Adrenal gland (tissue), 19 donors: ENCODE measurements at regions of chr13 and their contacts with region 1.

Region 1: GRCh38 chr13:110561344-110562035 is at the start of gene RAB20:
- DNase-seq: peak; percentile 91 to 94 (median 94)
- H3K4me3 ChIP-seq: peak within 1 kb of the TSS; percentile 67 to 98 (median 90)
- H3K27ac ChIP-seq: peak within 1 kb of the TSS; percentile 91 to 99 (median 98)
- H3K4me1 ChIP-seq: peaks cover 37 to 52% of the 10 kb centered on the region in 2 donors
- H3K27me3 ChIP-seq: no peaks in the 10 kb centered on the region
- CTCF ChIP-seq: no peak
- POLR2A ChIP-seq: peak; percentile 51 to 87
- total RNA-seq, gene RAB20: 30.8 to 259 (median 48.2) TPM

Region 2: DNA sequence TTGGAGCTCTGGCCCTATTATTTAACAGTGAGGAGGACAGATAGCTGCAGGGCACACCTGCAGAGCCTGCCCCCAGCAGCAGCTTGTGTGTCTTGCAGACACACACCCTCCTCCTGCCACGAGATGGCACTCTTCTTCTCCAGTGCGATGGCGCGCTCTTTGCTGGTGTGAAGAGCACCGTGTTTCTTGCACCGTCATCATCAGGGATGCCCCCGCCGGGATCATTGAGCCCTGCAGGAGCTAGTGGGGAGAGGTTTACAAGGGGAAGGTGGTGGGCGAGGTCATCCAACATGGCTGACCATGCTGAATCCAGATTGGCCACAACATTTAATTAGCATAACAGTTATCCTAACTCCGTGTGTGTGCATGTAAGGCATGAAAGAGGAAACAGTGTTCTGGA is 105.5 kb before region 1 on chr13:
- intact Hi-C with region 1: loop called in 1 of 2 experiments (anchors 10 kb)
- DNase-seq: peak; percentile 81 to 93 (median 86)
- H3K4me3 ChIP-seq: no peak overlapping the region
- H3K27ac ChIP-seq: no peak overlapping the region
- H3K4me1 ChIP-seq: no peaks in the 10 kb centered on the region
- H3K27me3 ChIP-seq: no peaks in the 10 kb centered on the region
- CTCF ChIP-seq: peak; percentile 81 to 94 (median 86)
- POLR2A ChIP-seq: no peak

Region 3: GRCh38 chr13:110499621-110500281 is 61.7 kb before region 1 on chr13:
- intact Hi-C with region 1: loop called in 1 of 2 experiments (anchors 5 kb)
- DNase-seq: no peak
- H3K4me3 ChIP-seq: no peak overlapping the region
- H3K27ac ChIP-seq: peak overlapping the region in 1 of 5 donors; percentile 4
- H3K4me1 ChIP-seq: peaks cover 7 to 8% of the 10 kb centered on the region in 2 donors
- H3K27me3 ChIP-seq: no peaks in the 10 kb centered on the region
- CTCF ChIP-seq: no peak
- POLR2A ChIP-seq: no peak

Region 4: GRCh38 chr13:110517505-110518225 is 43.8 kb before region 1 on chr13:
- intact Hi-C with region 1: loop called in 1 of 2 experiments (anchors 5 kb)
- DNase-seq: peak in 2 of 7 donors; percentile 29 to 53
- H3K4me3 ChIP-seq: no peak overlapping the region
- H3K27ac ChIP-seq: peak overlapping the region in 1 of 5 donors; percentile 16
- H3K4me1 ChIP-seq: peaks cover 18 to 31% of the 10 kb centered on the region in 2 donors
- H3K27me3 ChIP-seq: no peaks in the 10 kb centered on the region
- CTCF ChIP-seq: no peak
- POLR2A ChIP-seq: no peak